ENCODE measurements at regions of chr2 and their contacts with region 1.

Region 1: DNA sequence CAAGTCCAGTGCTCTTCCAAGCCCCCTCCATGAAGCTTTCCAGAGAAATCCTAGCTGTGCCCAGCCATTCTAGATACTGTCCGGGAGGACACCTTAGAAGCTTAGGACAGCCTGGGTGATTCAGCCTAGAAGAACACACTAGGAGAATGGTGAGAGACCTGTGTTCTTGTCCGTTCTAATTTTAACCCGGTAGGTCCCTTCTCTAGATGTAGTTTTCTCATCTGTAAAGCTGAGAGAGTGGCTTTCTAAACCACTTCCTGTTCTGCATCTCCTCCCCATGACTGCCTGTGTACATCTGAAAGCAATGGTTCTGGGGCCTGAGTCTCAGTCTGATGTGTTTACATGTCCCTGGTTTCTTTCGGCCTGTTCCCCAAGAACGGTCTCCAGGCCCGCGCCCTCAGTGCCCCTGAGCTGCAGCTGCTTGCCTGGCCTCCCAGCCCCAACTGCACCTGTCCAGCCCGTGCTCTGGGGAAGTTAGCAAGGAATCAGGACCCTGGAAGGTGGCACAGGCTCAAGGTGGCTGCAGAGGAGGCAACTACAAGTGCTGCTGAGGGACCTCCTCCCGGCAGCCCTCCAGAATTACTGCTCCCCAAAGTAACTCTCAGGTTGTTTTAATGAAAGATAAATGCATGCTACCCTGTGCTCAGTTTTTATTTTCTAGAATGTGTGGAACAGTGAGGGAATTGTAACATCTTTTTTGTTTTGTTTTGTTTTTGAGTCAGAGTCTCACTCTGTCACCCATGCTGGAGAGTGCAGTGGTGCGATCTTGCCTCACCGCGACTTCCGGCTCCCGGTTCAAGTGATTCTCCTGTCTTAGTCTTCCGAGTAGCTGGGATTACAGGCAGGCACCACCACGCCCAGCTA is 105.9 kb downstream of the LBH start:
- DNase-seq: peak; percentile 19 to 77 (median 36)
- ATAC-seq: peak; percentile 85 to 90 (median 88)
- H3K4me3 ChIP-seq: peak overlapping the region; percentile 1 to 33
- H3K4me3 Mint-ChIP-seq: peak overlapping the region; percentile 70 to 78 (median 76)
- H3K27ac ChIP-seq: peak overlapping the region; percentile 91
- H3K27ac Mint-ChIP-seq: peak overlapping the region; percentile 98 to 99
- H3K4me1 ChIP-seq: peaks cover 60 to 72% of the 10 kb centered on the region in 2 experiments
- H3K4me1 Mint-ChIP-seq: peaks cover 79 to 86% (median 85%) of the 10 kb centered on the region in 3 donors
- H3K27me3 ChIP-seq: no peaks in the 10 kb centered on the region
- H3K27me3 Mint-ChIP-seq: no peaks in the 10 kb centered on the region

Region 2: GRCh38 chr2:30362468-30363081 is 25.4 kb after region 1 on chr2:
- CTCF ChIA-PET with region 1: no interaction called
- POLR2A ChIA-PET with region 1: interaction called, 4 to 11 read pairs
- DNase-seq: no peak
- ATAC-seq: peak in 1 of 4 experiments; percentile 21
- H3K4me3 ChIP-seq: no peak overlapping the region
- H3K4me3 Mint-ChIP-seq: peak overlapping the region in 1 of 3 donors; percentile 49
- H3K27ac ChIP-seq: peak overlapping the region; percentile 63
- H3K27ac Mint-ChIP-seq: peak overlapping the region; percentile 44 to 89
- H3K4me1 ChIP-seq: peaks cover 38 to 46% of the 10 kb centered on the region in 2 experiments
- H3K4me1 Mint-ChIP-seq: peaks cover 55 to 67% (median 58%) of the 10 kb centered on the region in 3 donors
- H3K27me3 ChIP-seq: no peaks in the 10 kb centered on the region
- H3K27me3 Mint-ChIP-seq: no peaks in the 10 kb centered on the region

Region 3: GRCh38 chr2:30631051-30631671 is 294.0 kb after region 1 on chr2:
- CTCF ChIA-PET with region 1: no interaction called
- POLR2A ChIA-PET with region 1: no interaction called
- DNase-seq: peak in 1 of 35 experiments; percentile 42
- ATAC-seq: peak in 3 of 4 experiments; percentile 40 to 54 (median 46)
- H3K4me3 ChIP-seq: no peak overlapping the region
- H3K4me3 Mint-ChIP-seq: no peak overlapping the region
- H3K27ac ChIP-seq: no peak overlapping the region
- H3K27ac Mint-ChIP-seq: no peak overlapping the region
- H3K4me1 ChIP-seq: peaks cover 0 to 2% of the 10 kb centered on the region in 2 experiments
- H3K4me1 Mint-ChIP-seq: peaks cover 24 to 48% (median 29%) of the 10 kb centered on the region in 3 donors
- H3K27me3 ChIP-seq: no peaks in the 10 kb centered on the region
- H3K27me3 Mint-ChIP-seq: no peaks in the 10 kb centered on the region

Region 4: GRCh38 chr2:30686000-30686399 is 348.8 kb after region 1 on chr2:
- CTCF ChIA-PET with region 1: interaction called in 1 of 2 experiments, 14 read pairs
- POLR2A ChIA-PET with region 1: no interaction called
- DNase-seq: no peak
- ATAC-seq: no peak
- H3K4me3 ChIP-seq: no peak overlapping the region
- H3K4me3 Mint-ChIP-seq: no peak overlapping the region
- H3K27ac ChIP-seq: no peak overlapping the region
- H3K27ac Mint-ChIP-seq: no peak overlapping the region
- H3K4me1 ChIP-seq: no peaks in the 10 kb centered on the region
- H3K4me1 Mint-ChIP-seq: peaks cover 0 to 2% (median 0%) of the 10 kb centered on the region in 3 donors
- H3K27me3 ChIP-seq: no peaks in the 10 kb centered on the region
- H3K27me3 Mint-ChIP-seq: no peaks in the 10 kb centered on the region

Measured in T-cell (primary cell).